Activated CD8-positive, alpha-beta T cell treated with anti-CD3 and anti-CD28 coated beads, Interleukin-2, amount 10 ng/mL, durations not matched to agents 7 days and 5 days (primary cell): ENCODE measurements at regions of chr17 and their contacts with region 1.

Region 1: DNA sequence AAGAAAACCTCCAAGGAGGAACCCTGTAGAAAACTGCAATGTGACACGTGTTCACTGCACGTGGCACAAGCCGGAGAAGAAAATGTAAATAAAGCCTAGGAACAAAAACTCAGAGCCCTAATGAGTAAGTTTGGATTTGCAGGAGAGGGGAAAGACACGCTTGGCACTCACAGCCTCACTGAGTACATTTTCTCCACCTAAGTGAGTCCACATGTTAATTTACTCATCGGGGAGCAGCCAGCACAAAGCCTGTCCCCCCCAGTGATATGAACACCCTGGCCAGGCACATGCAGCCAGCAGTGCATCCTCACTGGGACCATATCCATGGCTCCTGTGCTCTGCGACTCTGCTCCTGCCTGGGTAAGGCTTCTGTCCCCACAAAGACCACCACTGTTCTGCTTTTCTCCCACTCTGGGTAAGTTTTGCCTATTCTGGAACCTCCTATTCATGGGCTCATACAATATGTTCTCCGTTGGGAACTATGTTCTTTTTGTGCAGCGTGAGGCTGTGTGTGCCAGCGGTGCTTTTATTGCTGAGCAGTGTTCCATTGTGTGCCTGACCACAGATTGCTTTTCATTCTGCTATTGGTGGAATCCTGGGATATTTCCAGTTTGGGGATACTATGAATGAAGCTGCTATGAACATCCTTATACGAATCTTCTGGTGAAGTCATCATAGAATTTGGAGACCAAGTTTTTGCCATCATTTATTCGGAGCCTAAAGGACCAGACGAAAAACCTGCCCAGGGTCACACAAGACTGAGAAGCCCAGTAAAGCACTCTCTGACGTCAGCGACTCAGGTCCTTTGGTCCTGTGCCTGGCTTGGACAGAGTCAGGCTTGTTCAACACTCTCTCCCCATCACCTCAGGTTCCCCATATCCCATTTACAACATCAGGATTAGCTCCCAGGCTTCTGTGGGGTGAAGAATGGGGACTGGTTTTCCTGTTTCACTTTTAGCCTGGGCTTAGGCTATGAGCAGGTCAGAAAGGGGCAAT is 53.3 kb downstream of the RNF112 start:
- DNase-seq: no peak
- ATAC-seq: no peak
- H3K4me3 Mint-ChIP-seq: no peak overlapping the region
- H3K27ac Mint-ChIP-seq: no peak overlapping the region
- H3K4me1 Mint-ChIP-seq: peaks cover 26% of the 10 kb centered on the region
- H3K27me3 Mint-ChIP-seq: no peaks in the 10 kb centered on the region

Region 2: GRCh38 chr17:19447085-19447583 is 17.2 kb before region 1 on chr17:
- CTCF ChIA-PET with region 1: interaction called, 10 read pairs
- POLR2A ChIA-PET with region 1: no interaction called
- DNase-seq: peak; percentile 78
- ATAC-seq: peak; percentile 44
- H3K4me3 Mint-ChIP-seq: no peak overlapping the region
- H3K27ac Mint-ChIP-seq: no peak overlapping the region
- H3K4me1 Mint-ChIP-seq: peaks cover 3% of the 10 kb centered on the region
- H3K27me3 Mint-ChIP-seq: peaks cover 22% of the 10 kb centered on the region

Region 3: DNA sequence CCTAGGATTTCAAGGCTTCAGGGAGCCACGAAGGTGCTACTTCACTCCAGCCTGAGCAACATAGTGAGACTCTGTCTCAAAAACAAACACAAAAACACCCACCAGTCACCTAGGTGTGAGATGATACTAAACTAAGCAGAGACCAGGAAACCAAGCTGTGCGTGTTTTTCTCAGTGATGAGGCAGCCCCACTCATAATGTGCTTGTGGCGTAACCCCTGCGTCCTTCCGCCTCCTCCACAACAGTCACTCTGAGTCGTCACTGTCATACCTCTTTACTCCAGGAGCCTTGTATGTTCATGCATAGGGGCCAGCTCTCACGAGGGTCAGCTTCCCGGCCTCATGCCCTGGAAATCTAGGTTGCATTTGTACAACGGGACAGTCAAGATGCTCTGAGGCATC is 38.2 kb after region 1 on chr17:
- CTCF ChIA-PET with region 1: no interaction called
- POLR2A ChIA-PET with region 1: no interaction called
- DNase-seq: peak; percentile 49
- ATAC-seq: peak; percentile 62
- H3K4me3 Mint-ChIP-seq: no peak overlapping the region
- H3K27ac Mint-ChIP-seq: no peak overlapping the region
- H3K4me1 Mint-ChIP-seq: peaks cover 2% of the 10 kb centered on the region
- H3K27me3 Mint-ChIP-seq: peaks cover 12% of the 10 kb centered on the region

Region 4: GRCh38 chr17:19579867-19580565 is 115.7 kb after region 1 on chr17:
- CTCF ChIA-PET with region 1: no interaction called
- POLR2A ChIA-PET with region 1: no interaction called
- DNase-seq: no peak
- ATAC-seq: no peak
- H3K4me3 Mint-ChIP-seq: no peak overlapping the region
- H3K27ac Mint-ChIP-seq: no peak overlapping the region
- H3K4me1 Mint-ChIP-seq: no peaks in the 10 kb centered on the region
- H3K27me3 Mint-ChIP-seq: peaks cover 23% of the 10 kb centered on the region

Region 5: GRCh38 chr17:19614900-19615299 is 150.6 kb after region 1 on chr17:
- CTCF ChIA-PET with region 1: no interaction called
- POLR2A ChIA-PET with region 1: no interaction called
- DNase-seq: no peak
- ATAC-seq: no peak
- H3K4me3 Mint-ChIP-seq: no peak overlapping the region
- H3K27ac Mint-ChIP-seq: no peak overlapping the region
- H3K4me1 Mint-ChIP-seq: no peaks in the 10 kb centered on the region
- H3K27me3 Mint-ChIP-seq: peaks cover 3% of the 10 kb centered on the region